ENCODE measurements at regions of chr1 and their contacts with region 1.

Region 1: DNA sequence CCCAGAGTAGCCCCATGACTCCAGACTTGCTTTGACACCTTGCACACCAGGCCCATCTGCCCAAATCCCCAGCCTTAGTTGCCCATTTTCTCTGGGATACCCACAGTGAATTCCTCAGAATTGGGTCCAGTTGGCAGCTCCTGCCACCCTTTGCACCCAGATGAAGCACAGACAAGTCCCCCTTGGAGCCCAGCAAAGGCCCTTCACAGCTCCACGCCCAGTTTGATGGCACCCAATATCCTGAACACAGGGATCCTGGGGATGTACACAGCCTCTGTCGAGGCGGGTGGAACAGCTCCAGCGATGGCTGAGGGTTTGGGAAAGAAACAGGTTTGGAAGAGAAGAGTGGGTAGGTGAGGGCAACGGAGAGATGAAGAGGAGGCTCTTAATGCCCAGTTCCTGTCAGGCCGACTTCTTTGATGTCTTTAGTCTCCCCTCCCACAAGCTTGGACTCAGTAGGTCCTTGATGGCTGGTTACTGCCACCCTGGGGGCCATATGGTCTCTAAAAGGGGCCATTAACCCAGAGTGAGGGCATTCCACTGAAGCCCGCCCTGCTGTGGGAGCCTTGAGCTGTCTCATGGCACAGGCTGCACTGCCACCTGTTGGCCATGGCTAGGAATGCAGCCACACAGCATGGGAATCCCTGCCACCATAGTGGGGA is 21.7 kb downstream of the TMEM53 start:
- DNase-seq: peak; percentile 84
- ATAC-seq: peak; percentile 98
- H3K4me3 Mint-ChIP-seq: no peak overlapping the region
- H3K27ac Mint-ChIP-seq: no peak overlapping the region
- H3K4me1 Mint-ChIP-seq: no peaks in the 10 kb centered on the region
- H3K27me3 Mint-ChIP-seq: no peaks in the 10 kb centered on the region
- CTCF ChIP-seq: peak; percentile 85

Region 2: DNA sequence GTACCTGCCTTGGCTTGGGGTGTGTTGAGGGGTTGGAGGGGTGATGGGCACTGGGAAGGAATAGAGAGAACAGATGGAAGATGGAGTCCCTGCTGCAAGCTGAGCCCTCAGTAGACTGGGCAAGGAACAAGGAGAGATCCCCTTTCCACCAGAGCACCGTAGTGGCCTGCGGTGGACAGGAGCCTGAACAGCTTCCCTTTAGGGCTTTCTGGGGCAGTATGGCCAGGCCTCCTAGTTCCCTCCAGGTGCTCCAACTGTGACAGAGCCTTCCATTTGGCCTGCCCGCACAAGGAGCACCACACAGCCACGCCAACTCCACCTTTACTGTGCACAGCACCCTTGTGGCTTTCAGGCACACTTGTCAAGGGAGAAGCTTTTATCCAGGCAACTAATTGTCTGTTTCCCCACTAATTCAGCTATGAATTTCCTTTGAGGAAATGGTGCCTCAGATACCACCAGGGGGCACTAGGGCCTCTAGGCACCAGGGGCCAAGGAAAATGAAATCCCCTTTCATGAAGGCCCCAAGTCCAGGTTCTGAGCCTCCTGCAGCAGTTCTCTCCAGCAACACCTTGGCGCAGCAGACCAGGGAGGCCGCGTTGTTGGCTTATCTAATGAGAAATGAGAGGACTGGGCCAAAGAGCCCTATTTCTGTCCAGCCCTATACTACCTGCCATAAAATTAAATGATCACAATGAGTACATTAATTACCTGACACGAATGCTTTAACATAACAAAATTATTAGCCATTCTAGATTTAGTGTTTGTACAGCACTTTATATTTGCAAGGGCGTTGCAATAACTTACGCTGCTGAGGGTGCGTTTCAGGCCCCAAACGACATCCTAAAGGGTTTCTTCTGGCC is 274.4 kb before region 1 on chr1:
- CTCF ChIA-PET with region 1: interaction called, 28 read pairs
- POLR2A ChIA-PET with region 1: interaction called, 3 read pairs
- intact Hi-C with region 1: no loop called
- DNase-seq: peak; percentile 75
- ATAC-seq: peak; percentile 60
- H3K4me3 Mint-ChIP-seq: no peak overlapping the region
- H3K27ac Mint-ChIP-seq: no peak overlapping the region
- H3K4me1 Mint-ChIP-seq: no peaks in the 10 kb centered on the region
- H3K27me3 Mint-ChIP-seq: peaks cover 1% of the 10 kb centered on the region
- CTCF ChIP-seq: peak; percentile 73

Region 3: DNA sequence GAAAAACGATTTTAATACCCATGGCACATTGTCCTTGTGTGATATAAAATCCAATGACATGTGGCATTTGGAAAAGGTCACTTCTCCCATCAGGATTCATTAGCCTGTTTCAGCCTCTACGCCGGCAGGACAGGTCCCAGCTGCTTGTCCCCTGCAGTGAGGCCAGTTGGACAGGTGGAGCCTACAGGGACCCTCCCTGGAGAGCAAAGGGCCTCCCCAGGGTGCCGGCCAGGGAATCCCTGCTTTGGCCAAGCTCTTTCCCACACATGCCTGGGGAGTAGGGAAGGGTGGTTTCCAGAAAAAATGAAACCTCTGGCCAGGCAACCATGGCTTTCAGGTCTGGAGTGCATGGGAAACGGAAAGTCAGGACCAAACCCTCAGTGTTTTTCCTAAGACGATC is 71.4 kb before region 1 on chr1:
- CTCF ChIA-PET with region 1: interaction called, 12 read pairs
- POLR2A ChIA-PET with region 1: no interaction called
- intact Hi-C with region 1: no loop called
- DNase-seq: no peak
- ATAC-seq: no peak
- H3K4me3 Mint-ChIP-seq: no peak overlapping the region
- H3K27ac Mint-ChIP-seq: no peak overlapping the region
- H3K4me1 Mint-ChIP-seq: no peaks in the 10 kb centered on the region
- H3K27me3 Mint-ChIP-seq: no peaks in the 10 kb centered on the region
- CTCF ChIP-seq: no peak

Region 4: GRCh38 chr1:44609412-44609767 is 43.2 kb before region 1 on chr1:
- CTCF ChIA-PET with region 1: interaction called, 69 read pairs
- POLR2A ChIA-PET with region 1: no interaction called
- intact Hi-C with region 1: loop called (anchors 2 kb)
- DNase-seq: peak; percentile 62
- ATAC-seq: no peak
- H3K4me3 Mint-ChIP-seq: no peak overlapping the region
- H3K27ac Mint-ChIP-seq: no peak overlapping the region
- H3K4me1 Mint-ChIP-seq: no peaks in the 10 kb centered on the region
- H3K27me3 Mint-ChIP-seq: no peaks in the 10 kb centered on the region
- CTCF ChIP-seq: peak; percentile 27

Region 5: DNA sequence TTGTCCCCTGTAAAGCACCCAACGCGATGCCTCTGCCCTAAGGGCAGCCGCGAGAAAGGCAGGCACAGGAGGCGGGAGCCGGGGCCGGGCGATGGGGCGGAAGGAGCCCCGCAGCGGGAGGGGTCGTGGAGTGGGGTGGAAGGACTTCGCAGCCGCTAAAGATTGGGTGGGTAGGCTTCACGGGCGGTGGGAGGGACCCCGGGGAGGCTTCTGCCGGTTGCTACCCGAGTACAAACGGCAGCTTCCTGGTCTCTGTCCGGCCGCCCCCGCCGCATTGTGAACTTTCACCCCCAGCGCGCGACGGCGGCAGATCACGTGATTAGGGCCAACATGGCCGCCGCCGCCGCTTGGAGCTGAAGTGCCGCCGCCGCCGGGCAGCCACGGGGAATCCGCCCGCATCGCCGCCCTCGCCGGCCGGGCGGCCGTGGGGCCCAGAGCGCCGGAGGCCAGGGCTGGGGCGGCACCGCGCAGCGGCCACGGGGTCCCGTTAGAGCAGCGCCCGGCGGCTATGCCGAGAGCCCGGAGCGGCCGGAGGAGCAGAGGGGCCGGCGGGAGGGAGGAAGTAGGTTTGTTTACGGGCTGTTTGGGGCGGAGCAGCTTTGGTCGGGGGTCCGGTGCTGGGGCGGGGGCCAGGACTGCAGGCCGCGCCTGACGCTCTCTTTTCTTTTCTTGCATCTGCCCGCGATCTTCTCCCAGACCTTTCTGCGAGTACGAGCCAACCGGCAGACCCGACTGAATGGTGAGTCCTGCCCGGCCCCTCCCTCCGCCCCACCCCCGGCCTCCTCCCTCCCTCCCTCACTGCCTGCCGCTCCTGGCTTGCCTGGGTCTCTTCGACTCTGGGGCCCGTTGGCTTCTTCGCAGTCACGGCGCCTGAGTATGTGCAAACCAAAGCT is 20.7 kb before region 1 on chr1:
- CTCF ChIA-PET with region 1: interaction called, 156 read pairs
- POLR2A ChIA-PET with region 1: interaction called, 22 read pairs
- intact Hi-C with region 1: no loop called
- DNase-seq: peak; percentile 96
- ATAC-seq: peak; percentile 84
- H3K4me3 Mint-ChIP-seq: peak overlapping the region; percentile 88
- H3K27ac Mint-ChIP-seq: peak overlapping the region; percentile 97
- H3K4me1 Mint-ChIP-seq: peaks cover 38% of the 10 kb centered on the region
- H3K27me3 Mint-ChIP-seq: no peaks in the 10 kb centered on the region
- CTCF ChIP-seq: no peak

Region 6: GRCh38 chr1:44664730-44665370 is 12.3 kb after region 1 on chr1:
- CTCF ChIA-PET with region 1: interaction called, 43 read pairs
- POLR2A ChIA-PET with region 1: interaction called, 6 read pairs
- intact Hi-C with region 1: no loop called
- DNase-seq: peak; percentile 72
- ATAC-seq: peak; percentile 94
- H3K4me3 Mint-ChIP-seq: peak overlapping the region; percentile 7
- H3K27ac Mint-ChIP-seq: peak overlapping the region; percentile 39
- H3K4me1 Mint-ChIP-seq: peaks cover 15% of the 10 kb centered on the region
- H3K27me3 Mint-ChIP-seq: no peaks in the 10 kb centered on the region
- CTCF ChIP-seq: no peak

Region 7: GRCh38 chr1:44696789-44697345 is 44.3 kb after region 1 on chr1:
- CTCF ChIA-PET with region 1: interaction called, 11 read pairs
- POLR2A ChIA-PET with region 1: no interaction called
- intact Hi-C with region 1: no loop called
- DNase-seq: peak; percentile 65
- ATAC-seq: peak; percentile 85
- H3K4me3 Mint-ChIP-seq: peak overlapping the region; percentile 41
- H3K27ac Mint-ChIP-seq: peak overlapping the region; percentile 85
- H3K4me1 Mint-ChIP-seq: peaks cover 37% of the 10 kb centered on the region
- H3K27me3 Mint-ChIP-seq: no peaks in the 10 kb centered on the region
- CTCF ChIP-seq: no peak

Region 8: DNA sequence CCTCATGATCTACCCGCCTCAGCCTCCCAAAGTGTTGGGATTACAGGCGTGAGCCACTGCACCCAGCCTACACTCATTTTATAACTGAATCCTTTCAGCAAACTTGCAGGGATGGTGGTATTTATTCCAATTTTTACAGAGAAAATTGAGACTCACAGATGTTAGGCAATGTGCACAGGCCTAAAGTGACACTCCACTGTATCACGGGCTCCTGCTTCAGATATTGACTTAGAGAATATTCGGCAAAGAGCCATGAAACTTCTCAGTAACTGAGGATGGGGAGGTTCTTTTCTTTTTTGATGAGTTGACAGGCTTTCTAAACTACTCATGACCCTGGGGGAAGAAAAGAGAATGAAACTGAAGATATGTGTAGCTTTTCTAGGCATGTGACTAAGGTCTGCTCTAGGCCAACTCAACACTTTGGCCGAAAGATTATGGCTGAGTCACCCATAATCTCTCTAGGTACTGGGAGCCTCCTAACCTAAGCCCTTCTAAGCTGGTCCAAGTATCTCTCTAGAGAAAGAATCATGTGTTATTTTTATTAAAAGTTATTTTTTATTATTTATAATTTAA is 210.3 kb after region 1 on chr1:
- CTCF ChIA-PET with region 1: no interaction called
- POLR2A ChIA-PET with region 1: no interaction called
- intact Hi-C with region 1: no loop called
- DNase-seq: no peak
- ATAC-seq: no peak
- H3K4me3 Mint-ChIP-seq: no peak overlapping the region
- H3K27ac Mint-ChIP-seq: no peak overlapping the region
- H3K4me1 Mint-ChIP-seq: no peaks in the 10 kb centered on the region
- H3K27me3 Mint-ChIP-seq: no peaks in the 10 kb centered on the region
- CTCF ChIP-seq: no peak

Measured in activated CD8-positive, alpha-beta T cell treated with anti-CD3 and anti-CD28 coated beads for 36 hours (primary cell).